ENCODE measurements at regions of chr3 and their contacts with region 1.

Region 1: GRCh38 chr3:194671900-194672808 is at the start of gene LSG1:
- DNase-seq: peak; percentile 71
- H3K4me3 ChIP-seq: peak within 1 kb of the TSS; percentile 89
- CTCF ChIP-seq: no peak

Region 2: GRCh38 chr3:194333212-194333980 is 338.8 kb before region 1 on chr3:
- CTCF ChIA-PET with region 1: interaction called, 16 read pairs
- POLR2A ChIA-PET with region 1: no interaction called
- DNase-seq: no peak
- H3K4me3 ChIP-seq: peak overlapping the region; percentile 68
- CTCF ChIP-seq: peak; percentile 92

Region 3: GRCh38 chr3:194647747-194648146 is 24.4 kb before region 1 on chr3:
- CTCF ChIA-PET with region 1: interaction called, 13 read pairs
- POLR2A ChIA-PET with region 1: no interaction called
- DNase-seq: no peak
- H3K4me3 ChIP-seq: no peak overlapping the region
- CTCF ChIP-seq: no peak

Region 4: DNA sequence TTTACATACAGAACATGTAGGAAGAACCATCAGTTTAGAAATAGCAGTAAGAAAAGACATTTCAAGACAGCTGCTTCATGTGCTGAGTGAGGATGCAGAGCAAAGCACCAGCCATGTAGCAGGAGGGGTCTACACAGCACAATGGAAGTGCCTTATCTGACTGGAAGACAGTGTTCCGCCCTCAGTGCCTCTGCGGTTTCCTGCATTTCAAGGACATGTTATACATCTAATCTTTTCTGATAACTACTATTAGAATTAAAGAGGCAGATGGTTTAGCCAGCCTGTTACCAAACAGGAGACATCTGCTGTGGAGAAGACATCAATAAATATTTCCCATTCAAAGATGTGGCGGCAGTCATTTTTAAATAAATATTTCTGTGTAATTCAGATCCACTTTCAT is 10.8 kb before region 1 on chr3:
- CTCF ChIA-PET with region 1: interaction called, 62 read pairs
- POLR2A ChIA-PET with region 1: no interaction called
- DNase-seq: no peak
- H3K4me3 ChIP-seq: no peak overlapping the region
- CTCF ChIP-seq: no peak

Region 5: DNA sequence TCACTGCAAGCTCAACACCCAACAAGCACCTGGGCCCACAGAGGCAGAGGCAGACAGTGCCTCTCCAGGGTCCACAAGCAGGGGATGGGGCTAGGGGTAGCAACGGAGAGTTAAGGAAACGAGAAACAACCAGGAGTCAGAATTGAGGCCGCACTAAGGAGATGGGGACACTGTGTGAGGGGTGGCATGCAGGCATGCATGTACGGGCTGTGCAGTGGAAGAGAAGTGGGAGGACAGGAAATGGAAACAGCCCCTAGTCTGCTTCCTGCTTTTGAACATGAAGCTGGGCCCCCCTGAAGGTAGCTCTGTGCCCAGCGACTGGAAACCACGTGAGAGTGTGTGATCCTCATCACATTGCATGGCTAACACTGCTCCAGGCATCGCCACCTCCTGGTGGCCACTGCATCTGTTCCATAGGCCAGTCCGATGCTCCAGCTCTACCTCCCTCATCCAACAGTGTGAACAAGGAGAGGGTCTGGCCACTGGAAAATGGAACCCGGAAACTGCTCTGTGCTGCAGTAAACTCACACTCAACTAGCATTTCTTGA is 554.8 kb after region 1 on chr3:
- CTCF ChIA-PET with region 1: interaction called, 12 read pairs
- POLR2A ChIA-PET with region 1: no interaction called
- DNase-seq: no peak
- H3K4me3 ChIP-seq: no peak overlapping the region
- CTCF ChIP-seq: peak; percentile 51

Region 6: GRCh38 chr3:195522254-195523023 is 850.3 kb after region 1 on chr3:
- CTCF ChIA-PET with region 1: interaction called, 15 read pairs
- POLR2A ChIA-PET with region 1: no interaction called
- DNase-seq: no peak
- H3K4me3 ChIP-seq: no peak overlapping the region
- CTCF ChIP-seq: peak; percentile 4